Caco-2 (cell line): ENCODE measurements at regions of chr2 and their contacts with region 1.

Region 1: GRCh38 chr2:72934683-72935610 is 17.6 kb downstream of the EMX1 start:
- DNase-seq: peak; percentile 70 to 74
- H3K4me3 ChIP-seq: no peak overlapping the region
- H3K4me3 Mint-ChIP-seq: no peak overlapping the region
- H3K27ac Mint-ChIP-seq: no peak overlapping the region
- H3K4me1 ChIP-seq: 0 out of 2 replicates have a peak, but pooled peaks cover 5% of the 10 kb centered on the region
- H3K4me1 Mint-ChIP-seq: peaks cover 6% of the 10 kb centered on the region
- H3K27me3 ChIP-seq: no peaks in the 10 kb centered on the region; the same call in 1 of the 2 replicates
- H3K27me3 Mint-ChIP-seq: no peaks in the 10 kb centered on the region
- CTCF ChIP-seq: peak; percentile 58 to 60

Region 2: GRCh38 chr2:72915907-72916742 is 18.8 kb before region 1 on chr2:
- CTCF ChIA-PET with region 1: interaction called, 3 read pairs
- POLR2A ChIA-PET with region 1: no interaction called
- intact Hi-C with region 1: loop called (anchors 2 kb)
- DNase-seq: peak; percentile 84 to 87
- H3K4me3 ChIP-seq: peak overlapping the region; percentile 61
- H3K4me3 Mint-ChIP-seq: peak overlapping the region; percentile 83
- H3K27ac Mint-ChIP-seq: no peak overlapping the region
- H3K4me1 ChIP-seq: peaks cover 19% of the 10 kb centered on the region; the same call in 1 of the 2 replicates
- H3K4me1 Mint-ChIP-seq: no peaks in the 10 kb centered on the region
- H3K27me3 ChIP-seq: peaks cover 4% of the 10 kb centered on the region
- H3K27me3 Mint-ChIP-seq: peaks cover 34% of the 10 kb centered on the region
- CTCF ChIP-seq: no peak